ENCODE measurements at regions of chr7 and their contacts with region 1.

Region 1: GRCh38 chr7:17095001-17095574 is 203.4 kb upstream of the AHR start:
- DNase-seq: peak; percentile 33
- ATAC-seq: peak; percentile 23

Region 2: GRCh38 chr7:16951483-16952080 is 143.5 kb before region 1 on chr7:
- intact Hi-C with region 1: no loop called
- DNase-seq: no peak
- ATAC-seq: no peak

Region 3: GRCh38 chr7:17255926-17256325 is 160.8 kb after region 1 on chr7:
- intact Hi-C with region 1: loop called (anchors 10 kb)
- DNase-seq: no peak
- ATAC-seq: no peak

Measured in left ventricle myocardium superior (tissue), 1 donor.